ENCODE measurements at regions of chr17 and their contacts with region 1.

Region 1: GRCh38 chr17:35540589-35541404 is 3.3 kb upstream of the SLFN12L start:
- DNase-seq: peak; percentile 70
- ATAC-seq: peak; percentile 79
- H3K4me3 ChIP-seq: peak overlapping the region; percentile 58 to 90 (median 70)
- H3K4me3 Mint-ChIP-seq: peak overlapping the region; percentile 89
- H3K27ac ChIP-seq: peak overlapping the region; percentile 75 to 84
- H3K27ac Mint-ChIP-seq: peak overlapping the region; percentile 87
- H3K4me1 ChIP-seq: peaks cover 24 to 33% of the 10 kb centered on the region in 2 donors
- H3K4me1 Mint-ChIP-seq: peaks cover 39% of the 10 kb centered on the region
- H3K27me3 ChIP-seq: no peaks in the 10 kb centered on the region
- H3K27me3 Mint-ChIP-seq: no peaks in the 10 kb centered on the region
- CTCF ChIP-seq: no peak

Region 2: GRCh38 chr17:34420254-34420766 is 1120.5 kb before region 1 on chr17:
- CTCF ChIA-PET with region 1: no interaction called
- POLR2A ChIA-PET with region 1: no interaction called
- intact Hi-C with region 1: loop called (anchors 10 kb)
- DNase-seq: peak; percentile 75
- ATAC-seq: peak; percentile 58
- H3K4me3 ChIP-seq: no peak overlapping the region
- H3K4me3 Mint-ChIP-seq: no peak overlapping the region
- H3K27ac ChIP-seq: no peak overlapping the region
- H3K27ac Mint-ChIP-seq: no peak overlapping the region
- H3K4me1 ChIP-seq: peaks cover 6 to 11% of the 10 kb centered on the region in 2 donors
- H3K4me1 Mint-ChIP-seq: no peaks in the 10 kb centered on the region
- H3K27me3 ChIP-seq: peaks cover 0 to 16% (median 5%) of the 10 kb centered on the region in 4 experiments
- H3K27me3 Mint-ChIP-seq: peaks cover 44% of the 10 kb centered on the region
- CTCF ChIP-seq: peak; percentile 99

Region 3: DNA sequence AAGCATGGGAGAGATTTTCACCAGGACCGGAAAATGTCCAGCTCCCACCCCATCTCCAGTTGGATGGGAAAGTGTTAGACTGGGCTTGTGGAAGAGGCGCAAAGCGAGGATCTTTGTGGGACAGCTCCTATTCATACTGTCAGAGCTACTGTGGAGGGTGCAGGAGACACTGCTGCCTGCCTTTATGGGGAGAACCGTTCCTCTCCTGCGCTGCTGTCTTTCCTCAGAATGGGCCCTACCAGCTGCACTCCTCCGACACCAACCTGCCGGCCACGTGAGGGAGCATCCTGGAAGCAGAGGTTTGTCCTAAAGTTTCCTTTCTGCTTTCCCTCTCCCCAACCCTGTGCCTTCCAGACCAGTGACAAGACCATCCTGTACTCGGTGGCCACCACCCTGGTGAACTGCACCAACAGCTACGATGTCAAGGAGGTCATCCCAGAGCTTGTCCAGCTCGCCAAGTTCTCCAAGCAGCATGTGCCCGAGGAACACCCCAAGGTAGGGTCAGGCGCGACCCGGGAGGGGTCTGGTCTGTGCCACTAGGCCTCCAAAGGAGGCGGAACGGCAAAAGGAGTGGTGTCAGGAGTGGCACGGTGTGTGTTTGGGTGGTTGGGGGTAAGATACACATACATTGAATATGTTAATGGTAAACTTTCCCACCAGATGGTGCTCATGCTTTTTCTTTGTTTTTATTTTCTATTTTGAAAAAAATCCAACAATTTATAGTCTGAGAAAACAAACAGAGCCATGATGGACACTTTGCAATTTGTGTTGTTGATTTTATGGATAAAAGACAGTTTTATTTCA is 369.6 kb before region 1 on chr17:
- CTCF ChIA-PET with region 1: interaction called, 11 read pairs
- POLR2A ChIA-PET with region 1: no interaction called
- intact Hi-C with region 1: loop called (anchors 1 kb)
- DNase-seq: peak; percentile 28
- ATAC-seq: peak; percentile 31
- H3K4me3 ChIP-seq: no peak overlapping the region
- H3K4me3 Mint-ChIP-seq: no peak overlapping the region
- H3K27ac ChIP-seq: no peak overlapping the region
- H3K27ac Mint-ChIP-seq: no peak overlapping the region
- H3K4me1 ChIP-seq: no peaks in the 10 kb centered on the region
- H3K4me1 Mint-ChIP-seq: no peaks in the 10 kb centered on the region
- H3K27me3 ChIP-seq: peaks cover 0 to 9% (median 0%) of the 10 kb centered on the region in 4 experiments
- H3K27me3 Mint-ChIP-seq: peaks cover 28% of the 10 kb centered on the region
- CTCF ChIP-seq: peak; percentile 63

Region 4: GRCh38 chr17:35373534-35373983 is 167.2 kb before region 1 on chr17 and contains the start of gene SLFN11:
- CTCF ChIA-PET with region 1: interaction called, 9 read pairs
- POLR2A ChIA-PET with region 1: no interaction called
- intact Hi-C with region 1: loop called (anchors 2 kb)
- DNase-seq: peak; percentile 85
- ATAC-seq: peak; percentile 77
- H3K4me3 ChIP-seq: peak within 1 kb of the TSS; percentile 18 to 87 (median 72)
- H3K4me3 Mint-ChIP-seq: peak within 1 kb of the TSS; percentile 96
- H3K27ac ChIP-seq: peak within 1 kb of the TSS; percentile 79 to 85
- H3K27ac Mint-ChIP-seq: peak within 1 kb of the TSS; percentile 99
- H3K4me1 ChIP-seq: peaks cover 7 to 8% of the 10 kb centered on the region in 2 donors
- H3K4me1 Mint-ChIP-seq: peaks cover 49% of the 10 kb centered on the region
- H3K27me3 ChIP-seq: no peaks in the 10 kb centered on the region
- H3K27me3 Mint-ChIP-seq: no peaks in the 10 kb centered on the region
- CTCF ChIP-seq: no peak
- total RNA-seq, gene SLFN11: 48.1 and 52.2 TPM in 2 replicates

Region 5: GRCh38 chr17:35486920-35487732 is 53.7 kb before region 1 on chr17:
- CTCF ChIA-PET with region 1: interaction called, 4 read pairs
- POLR2A ChIA-PET with region 1: no interaction called
- intact Hi-C with region 1: loop called (anchors 2 kb)
- DNase-seq: peak; percentile 65
- ATAC-seq: peak; percentile 53
- H3K4me3 ChIP-seq: peak overlapping the region; percentile 67 to 94 (median 79)
- H3K4me3 Mint-ChIP-seq: peak overlapping the region; percentile 98
- H3K27ac ChIP-seq: no peak overlapping the region
- H3K27ac Mint-ChIP-seq: peak overlapping the region; percentile 87
- H3K4me1 ChIP-seq: peaks cover 22 to 23% of the 10 kb centered on the region in 2 donors
- H3K4me1 Mint-ChIP-seq: peaks cover 25% of the 10 kb centered on the region
- H3K27me3 ChIP-seq: peaks cover 0 to 44% (median 35%) of the 10 kb centered on the region in 4 experiments
- H3K27me3 Mint-ChIP-seq: peaks cover 36% of the 10 kb centered on the region
- CTCF ChIP-seq: no peak

Region 6: DNA sequence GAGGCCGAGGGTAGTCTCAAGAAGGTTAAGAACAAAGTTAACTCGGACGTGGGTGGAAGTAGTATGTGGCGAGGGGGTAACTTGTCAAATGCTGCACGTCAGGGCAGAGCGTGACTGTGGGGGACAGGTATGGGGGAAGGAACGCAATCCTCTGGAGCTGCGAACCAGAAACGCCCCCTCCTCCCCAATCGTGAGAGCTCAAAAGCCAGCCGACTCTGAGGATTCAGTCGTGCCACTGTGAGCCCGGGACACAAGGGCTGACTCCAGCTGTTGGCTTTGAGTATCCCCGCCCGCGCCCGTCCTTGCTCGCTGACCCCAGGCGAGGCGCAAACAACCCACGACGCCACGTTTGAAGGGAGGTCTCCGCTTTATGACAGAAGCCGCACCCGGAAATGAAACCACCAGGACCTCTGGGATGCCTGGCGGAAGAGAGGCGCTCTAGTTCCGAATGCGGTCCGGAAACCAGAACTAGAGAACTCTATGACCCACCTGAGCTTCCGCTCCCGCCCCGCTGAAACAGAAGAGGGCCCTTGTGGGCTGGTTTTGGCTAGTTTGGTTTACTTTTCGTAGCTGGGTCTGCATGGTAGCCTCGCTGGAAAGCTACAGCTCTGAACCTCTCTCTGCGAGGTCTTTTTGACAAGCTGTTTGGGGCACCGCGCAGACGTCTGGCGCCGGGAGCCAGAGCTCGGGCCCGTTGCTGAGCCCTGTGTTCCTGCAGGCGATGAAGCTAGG is 37.6 kb after region 1 on chr17 and contains the start of gene PEX12:
- CTCF ChIA-PET with region 1: interaction called, 6 read pairs
- POLR2A ChIA-PET with region 1: interaction called, 4 read pairs
- intact Hi-C with region 1: loop called (anchors 2 kb)
- DNase-seq: peak; percentile 94
- ATAC-seq: peak; percentile 95
- H3K4me3 ChIP-seq: peak within 1 kb of the TSS; percentile 80 to 99 (median 95)
- H3K4me3 Mint-ChIP-seq: peak within 1 kb of the TSS; percentile 97
- H3K27ac ChIP-seq: peak within 1 kb of the TSS; percentile 86 to 89
- H3K27ac Mint-ChIP-seq: peak within 1 kb of the TSS; percentile 98
- H3K4me1 ChIP-seq: peaks cover 16 to 20% of the 10 kb centered on the region in 2 donors
- H3K4me1 Mint-ChIP-seq: peaks cover 25% of the 10 kb centered on the region
- H3K27me3 ChIP-seq: no peaks in the 10 kb centered on the region
- H3K27me3 Mint-ChIP-seq: no peaks in the 10 kb centered on the region
- CTCF ChIP-seq: no peak
- total RNA-seq, gene PEX12: 5.1 and 5.5 TPM in 2 replicates

Region 7: DNA sequence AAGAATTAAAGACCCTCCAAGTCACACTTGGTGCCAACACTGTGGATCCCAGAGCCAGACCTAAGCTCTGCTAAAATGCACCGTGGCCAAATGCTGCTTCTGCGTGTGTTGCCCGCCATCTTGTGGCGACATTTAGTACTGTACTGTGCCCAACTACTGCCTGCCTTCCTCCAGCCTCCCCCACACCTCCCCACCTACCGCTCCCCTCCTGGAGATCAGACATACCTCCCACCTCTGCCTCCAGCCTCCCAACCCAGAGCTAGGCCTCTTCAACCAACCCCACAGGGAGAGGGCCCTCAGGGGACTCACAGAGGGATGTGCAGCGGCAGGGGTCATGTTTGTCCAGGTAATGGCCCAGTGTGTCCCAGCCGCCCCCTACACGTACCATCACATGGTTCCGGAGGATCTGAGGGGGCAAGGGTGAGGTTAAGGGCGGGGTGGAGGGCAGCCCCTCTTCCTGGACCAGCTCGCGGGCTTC is 206.8 kb after region 1 on chr17:
- CTCF ChIA-PET with region 1: interaction called, 10 read pairs
- POLR2A ChIA-PET with region 1: no interaction called
- intact Hi-C with region 1: loop called (anchors 1 kb)
- DNase-seq: peak; percentile 84
- ATAC-seq: peak; percentile 92
- H3K4me3 ChIP-seq: no peak overlapping the region
- H3K4me3 Mint-ChIP-seq: no peak overlapping the region
- H3K27ac ChIP-seq: no peak overlapping the region
- H3K27ac Mint-ChIP-seq: no peak overlapping the region
- H3K4me1 ChIP-seq: peaks cover 3 to 10% of the 10 kb centered on the region in 2 donors
- H3K4me1 Mint-ChIP-seq: peaks cover 6% of the 10 kb centered on the region
- H3K27me3 ChIP-seq: peaks cover 0 to 51% (median 23%) of the 10 kb centered on the region in 4 experiments
- H3K27me3 Mint-ChIP-seq: peaks cover 51% of the 10 kb centered on the region
- CTCF ChIP-seq: peak; percentile 88